CD8-positive, alpha-beta T cell (primary cell): ENCODE measurements at regions of chr17 and their contacts with region 1.

Region 1: DNA sequence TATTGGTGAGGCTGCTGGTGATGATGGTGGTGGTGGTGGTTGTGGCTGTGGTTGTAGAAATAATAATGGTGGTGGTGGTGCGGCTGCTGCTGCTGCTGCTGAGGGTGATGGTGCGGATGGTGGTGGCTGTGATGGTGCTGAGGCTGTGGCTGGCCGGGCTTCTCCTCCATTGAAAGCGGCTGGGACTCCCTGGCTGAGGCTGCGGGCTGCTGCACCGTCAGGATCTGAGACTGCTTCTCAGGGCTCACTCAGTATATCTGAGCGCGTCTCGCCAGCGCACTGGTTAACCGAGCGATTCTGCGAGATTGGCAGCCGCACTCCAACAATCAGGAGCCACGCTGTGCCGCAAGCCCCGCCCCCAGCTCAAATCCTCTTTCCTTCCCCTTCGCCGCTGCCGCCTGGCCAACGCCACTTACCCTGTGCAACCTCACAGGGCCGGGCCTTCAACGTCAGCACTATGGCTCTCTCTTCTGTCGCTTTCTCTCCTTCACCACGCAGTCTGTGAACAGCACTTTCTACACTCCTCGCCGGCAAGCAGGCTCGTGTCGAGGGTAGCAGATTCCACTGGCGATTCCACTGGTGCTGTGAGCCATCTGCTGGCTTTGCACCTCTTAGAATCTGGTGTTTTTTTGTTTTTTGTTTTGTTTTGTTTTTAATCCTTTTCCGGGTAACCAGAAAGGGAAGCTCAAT is at the start of gene NUFIP2:
- DNase-seq: peak; percentile 94 to 100 (median 99)
- ATAC-seq: peak; percentile 86
- H3K4me3 ChIP-seq: peak within 1 kb of the TSS; percentile 93 to 94
- H3K4me3 Mint-ChIP-seq: peak within 1 kb of the TSS; percentile 99
- H3K27ac ChIP-seq: peak within 1 kb of the TSS; percentile 70 to 89
- H3K27ac Mint-ChIP-seq: peak within 1 kb of the TSS; percentile 98
- H3K4me1 ChIP-seq: peaks cover 40% of the 10 kb centered on the region
- H3K4me1 Mint-ChIP-seq: peaks cover 42% of the 10 kb centered on the region
- H3K27me3 ChIP-seq: no peaks in the 10 kb centered on the region
- H3K27me3 Mint-ChIP-seq: no peaks in the 10 kb centered on the region
- CTCF ChIP-seq: no peak
- total RNA-seq, gene NUFIP2: 67.9 to 71.8 TPM

Region 2: GRCh38 chr17:28661635-28662537 is 632.1 kb before region 1 on chr17 and contains the starts of genes SDF2 and SUPT6H:
- CTCF ChIA-PET with region 1: no interaction called
- POLR2A ChIA-PET with region 1: interaction called, 3 read pairs
- intact Hi-C with region 1: loop called in 1 of 2 experiments (anchors 10 kb)
- DNase-seq: peak; percentile 83 to 97 (median 96)
- ATAC-seq: peak; percentile 85
- H3K4me3 ChIP-seq: peak within 1 kb of the TSS; percentile 91 to 94
- H3K4me3 Mint-ChIP-seq: peak within 1 kb of the TSS; percentile 98
- H3K27ac ChIP-seq: peak within 1 kb of the TSS; percentile 98 to 99
- H3K27ac Mint-ChIP-seq: peak within 1 kb of the TSS; percentile 99
- H3K4me1 ChIP-seq: peaks cover 43% of the 10 kb centered on the region
- H3K4me1 Mint-ChIP-seq: peaks cover 60% of the 10 kb centered on the region
- H3K27me3 ChIP-seq: no peaks in the 10 kb centered on the region
- H3K27me3 Mint-ChIP-seq: no peaks in the 10 kb centered on the region
- CTCF ChIP-seq: peak; percentile 20
- total RNA-seq, gene SDF2: 30.4 to 38.3 TPM
- total RNA-seq, gene SUPT6H: 163 to 169 TPM

Region 3: DNA sequence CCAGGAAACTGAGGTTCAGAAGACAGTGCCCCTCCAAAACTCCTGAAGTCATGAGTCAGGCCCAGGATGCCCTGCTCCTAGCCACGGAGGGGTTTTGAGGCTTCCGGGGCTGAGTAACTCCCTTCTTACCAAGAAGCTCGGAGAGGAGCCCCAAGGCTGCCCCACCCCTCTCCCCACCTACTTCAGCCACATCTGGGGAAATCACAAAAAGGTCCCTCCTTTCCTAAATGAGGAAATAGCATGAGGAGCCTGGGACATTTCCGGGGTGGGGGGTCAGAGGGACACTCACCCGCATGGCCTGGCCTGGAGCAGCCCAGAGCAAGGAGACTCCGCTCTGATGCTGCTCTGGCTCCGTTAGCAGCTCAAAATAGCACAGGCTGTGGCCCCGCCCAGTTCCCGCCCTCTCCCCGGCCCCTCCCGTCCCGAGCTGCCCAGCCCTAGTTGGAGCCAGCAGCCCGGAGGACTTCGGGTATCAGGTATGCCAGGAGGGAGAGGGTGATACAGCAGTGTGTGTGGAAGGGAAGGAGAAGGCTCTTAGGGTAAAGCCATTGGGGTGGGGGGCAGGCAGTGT is 153.9 kb before region 1 on chr17:
- CTCF ChIA-PET with region 1: interaction called, 7 read pairs
- POLR2A ChIA-PET with region 1: interaction called, 14 read pairs
- intact Hi-C with region 1: loop called in 1 of 2 experiments (anchors 2 kb)
- DNase-seq: peak; percentile 50 to 91 (median 85)
- ATAC-seq: peak; percentile 72
- H3K4me3 ChIP-seq: peak overlapping the region; percentile 69 to 73
- H3K4me3 Mint-ChIP-seq: peak overlapping the region; percentile 93
- H3K27ac ChIP-seq: peak overlapping the region; percentile 54 to 84
- H3K27ac Mint-ChIP-seq: peak overlapping the region; percentile 100
- H3K4me1 ChIP-seq: peaks cover 50% of the 10 kb centered on the region
- H3K4me1 Mint-ChIP-seq: peaks cover 68% of the 10 kb centered on the region
- H3K27me3 ChIP-seq: no peaks in the 10 kb centered on the region
- H3K27me3 Mint-ChIP-seq: no peaks in the 10 kb centered on the region
- CTCF ChIP-seq: no peak

Region 4: GRCh38 chr17:29219378-29220047 is 74.5 kb before region 1 on chr17:
- CTCF ChIA-PET with region 1: interaction called, 3 read pairs
- POLR2A ChIA-PET with region 1: no interaction called
- intact Hi-C with region 1: loop called in 1 of 2 experiments (anchors 2 kb)
- DNase-seq: peak; percentile 35 to 81 (median 75)
- ATAC-seq: peak; percentile 86
- H3K4me3 ChIP-seq: no peak overlapping the region
- H3K4me3 Mint-ChIP-seq: no peak overlapping the region
- H3K27ac ChIP-seq: no peak overlapping the region
- H3K27ac Mint-ChIP-seq: no peak overlapping the region
- H3K4me1 ChIP-seq: no peaks in the 10 kb centered on the region
- H3K4me1 Mint-ChIP-seq: peaks cover 5% of the 10 kb centered on the region
- H3K27me3 ChIP-seq: no peaks in the 10 kb centered on the region
- H3K27me3 Mint-ChIP-seq: no peaks in the 10 kb centered on the region
- CTCF ChIP-seq: peak; percentile 78

Region 5: DNA sequence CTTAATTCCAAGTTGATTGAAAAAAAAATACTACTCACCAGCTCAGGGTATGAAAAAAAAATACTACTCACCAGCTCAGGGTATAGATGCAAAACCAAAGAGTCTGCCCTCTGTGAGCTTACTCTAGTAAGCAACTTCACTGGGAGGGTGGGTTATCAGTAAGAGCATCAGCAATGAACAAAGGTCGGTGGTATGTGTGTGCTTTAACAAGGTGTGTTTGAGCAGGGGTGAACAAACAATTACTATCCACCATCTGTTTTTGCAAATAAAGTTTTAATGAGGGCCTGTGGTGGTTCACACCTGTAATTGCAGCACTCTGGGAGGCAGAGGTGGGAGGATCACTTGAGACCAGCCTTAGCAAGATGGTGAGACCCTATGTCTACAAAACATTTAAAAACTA is 20.1 kb before region 1 on chr17:
- CTCF ChIA-PET with region 1: interaction called, 6 read pairs
- POLR2A ChIA-PET with region 1: interaction called, 4 read pairs
- intact Hi-C with region 1: loop called in 1 of 2 experiments (anchors 2 kb)
- DNase-seq: no peak
- ATAC-seq: no peak
- H3K4me3 ChIP-seq: no peak overlapping the region
- H3K4me3 Mint-ChIP-seq: no peak overlapping the region
- H3K27ac ChIP-seq: no peak overlapping the region
- H3K27ac Mint-ChIP-seq: peak overlapping the region; percentile 67
- H3K4me1 ChIP-seq: peaks cover 43% of the 10 kb centered on the region
- H3K4me1 Mint-ChIP-seq: peaks cover 67% of the 10 kb centered on the region
- H3K27me3 ChIP-seq: no peaks in the 10 kb centered on the region
- H3K27me3 Mint-ChIP-seq: no peaks in the 10 kb centered on the region
- CTCF ChIP-seq: no peak

Region 6: DNA sequence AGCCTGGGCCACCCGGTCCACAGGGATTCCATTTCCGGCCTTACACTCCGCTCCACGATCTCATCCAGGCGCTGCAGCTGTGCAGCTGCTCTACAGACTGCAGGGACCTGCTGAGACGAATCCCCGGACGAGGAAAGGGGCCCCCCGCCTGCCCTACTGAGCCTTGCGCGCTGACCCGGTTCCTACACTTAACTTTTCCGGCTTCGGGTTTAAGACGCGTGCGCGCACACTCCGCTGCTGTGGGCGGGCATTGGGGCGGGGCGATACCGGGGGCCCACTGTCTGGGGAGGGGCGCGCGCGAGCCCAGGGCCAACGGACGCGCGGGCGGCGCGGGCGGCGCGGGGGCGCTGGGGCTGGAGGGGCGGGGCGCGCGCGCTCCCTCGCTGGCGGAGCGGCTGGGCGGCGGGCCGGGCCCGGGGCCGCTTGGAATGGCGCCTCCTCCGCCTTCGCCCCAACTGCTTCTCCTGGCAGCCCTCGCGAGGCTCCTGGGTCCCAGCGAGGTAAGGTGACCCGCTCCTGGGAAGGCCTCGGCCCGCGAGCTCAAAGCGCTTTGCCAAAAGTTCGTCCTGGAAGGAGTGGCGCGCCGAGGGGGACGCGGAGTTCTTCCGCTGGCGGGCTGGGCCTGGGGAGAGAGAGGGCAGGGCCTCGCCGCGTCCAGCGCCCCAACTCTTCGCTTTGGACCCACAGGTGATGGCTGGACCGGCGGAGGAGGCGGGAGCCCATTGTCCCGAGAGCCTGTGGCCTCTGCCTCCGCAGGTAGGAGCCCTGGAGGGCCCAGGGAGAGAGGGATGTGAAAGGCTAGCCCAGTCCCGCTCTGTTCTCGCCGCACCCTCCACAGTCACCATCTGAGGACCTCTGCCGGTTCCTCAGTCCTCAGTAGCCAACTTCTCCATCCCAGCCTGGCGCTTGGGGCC is 274.6 kb after region 1 on chr17 and contains the start of gene TP53I13:
- CTCF ChIA-PET with region 1: no interaction called
- POLR2A ChIA-PET with region 1: interaction called, 6 read pairs
- intact Hi-C with region 1: loop called (anchors 5 kb)
- DNase-seq: peak; percentile 71 to 95 (median 91)
- ATAC-seq: peak; percentile 57
- H3K4me3 ChIP-seq: peak within 1 kb of the TSS; percentile 66 to 94
- H3K4me3 Mint-ChIP-seq: peak within 1 kb of the TSS; percentile 94
- H3K27ac ChIP-seq: peak within 1 kb of the TSS; percentile 53 to 78
- H3K27ac Mint-ChIP-seq: peak within 1 kb of the TSS; percentile 86
- H3K4me1 ChIP-seq: peaks cover 30% of the 10 kb centered on the region
- H3K4me1 Mint-ChIP-seq: peaks cover 41% of the 10 kb centered on the region
- H3K27me3 ChIP-seq: no peaks in the 10 kb centered on the region
- H3K27me3 Mint-ChIP-seq: no peaks in the 10 kb centered on the region
- CTCF ChIP-seq: no peak
- total RNA-seq, gene TP53I13: 50.2 to 54.1 TPM

Region 7: DNA sequence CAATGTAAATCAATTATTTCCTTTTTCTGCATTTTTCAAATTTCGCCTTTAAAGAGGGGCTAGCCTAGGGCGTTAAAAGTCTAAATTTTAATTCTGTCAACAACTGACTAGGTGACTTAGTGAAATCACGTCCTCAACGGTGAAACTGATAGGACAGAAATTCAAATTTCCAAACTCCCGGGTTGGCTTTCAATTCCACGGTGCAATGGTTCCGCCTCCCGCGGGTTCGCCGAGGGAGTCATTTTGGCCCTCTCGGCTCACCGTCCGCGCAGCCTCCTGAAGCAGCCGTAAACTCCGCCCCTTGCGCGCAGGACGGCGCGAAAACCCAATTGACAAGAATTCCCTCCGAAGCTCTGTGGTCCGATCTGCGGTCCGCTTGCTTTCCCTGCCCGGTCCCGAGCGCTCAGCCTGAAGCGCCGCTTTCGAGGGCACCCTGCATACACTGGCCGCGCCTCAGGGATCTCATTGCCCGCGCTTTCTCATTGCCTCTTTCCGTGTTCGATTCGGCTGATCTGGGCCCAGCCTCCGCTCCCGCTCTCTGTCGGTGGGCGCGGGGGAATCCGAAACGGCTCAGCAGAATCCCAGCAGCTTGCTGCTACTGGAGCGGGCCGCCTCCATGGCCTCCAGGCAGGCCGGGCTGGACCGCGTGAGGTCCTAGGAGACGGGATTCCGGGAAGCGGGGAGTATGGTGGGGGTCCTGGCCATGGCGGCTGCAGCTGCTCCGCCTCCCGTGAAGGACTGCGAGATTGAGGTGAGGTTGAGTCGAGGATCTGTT is 1537.8 kb after region 1 on chr17 and contains the start of gene ATAD5:
- CTCF ChIA-PET with region 1: no interaction called
- POLR2A ChIA-PET with region 1: no interaction called
- intact Hi-C with region 1: no loop called
- DNase-seq: peak; percentile 70 to 94 (median 88)
- ATAC-seq: peak; percentile 99
- H3K4me3 ChIP-seq: peak within 1 kb of the TSS; percentile 80 to 95
- H3K4me3 Mint-ChIP-seq: peak within 1 kb of the TSS; percentile 97
- H3K27ac ChIP-seq: peak within 1 kb of the TSS in 1 of 2 experiments; percentile 41
- H3K27ac Mint-ChIP-seq: peak within 1 kb of the TSS; percentile 89
- H3K4me1 ChIP-seq: peaks cover 19% of the 10 kb centered on the region
- H3K4me1 Mint-ChIP-seq: peaks cover 23% of the 10 kb centered on the region
- H3K27me3 ChIP-seq: no peaks in the 10 kb centered on the region
- H3K27me3 Mint-ChIP-seq: no peaks in the 10 kb centered on the region
- CTCF ChIP-seq: no peak
- total RNA-seq, gene ATAD5: 3.6 to 3.8 TPM